Activated naive CD4-positive, alpha-beta T cell treated with anti-CD3 and anti-CD28 coated beads, Interleukin-2, amount 10 ng/mL, durations not matched to agents 7 days and 5 days (primary cell): ENCODE measurements at regions of chr4 and their contacts with region 1.

Region 1: GRCh38 chr4:102826890-102827673 is at the start of gene UBE2D3:
- DNase-seq: peak; percentile 95
- H3K4me3 Mint-ChIP-seq: no peak within 1 kb of the TSS
- H3K27ac Mint-ChIP-seq: no peak within 1 kb of the TSS
- H3K4me1 Mint-ChIP-seq: peaks cover 41% of the 10 kb centered on the region
- H3K27me3 Mint-ChIP-seq: peaks cover 5% of the 10 kb centered on the region

Region 2: GRCh38 chr4:102772738-102773340 is 54.2 kb before region 1 on chr4:
- CTCF ChIA-PET with region 1: no interaction called
- DNase-seq: no peak
- H3K4me3 Mint-ChIP-seq: no peak overlapping the region
- H3K27ac Mint-ChIP-seq: no peak overlapping the region
- H3K4me1 Mint-ChIP-seq: no peaks in the 10 kb centered on the region
- H3K27me3 Mint-ChIP-seq: peaks cover 13% of the 10 kb centered on the region

Region 3: GRCh38 chr4:102868781-102869568 is 41.9 kb after region 1 on chr4 and contains the start of gene CISD2:
- CTCF ChIA-PET with region 1: interaction called, 26 read pairs
- DNase-seq: peak; percentile 93
- H3K4me3 Mint-ChIP-seq: peak within 1 kb of the TSS; percentile 94
- H3K27ac Mint-ChIP-seq: peak within 1 kb of the TSS; percentile 98
- H3K4me1 Mint-ChIP-seq: peaks cover 74% of the 10 kb centered on the region
- H3K27me3 Mint-ChIP-seq: no peaks in the 10 kb centered on the region